A673 (cell line): ENCODE measurements at regions of chrX and their contacts with region 1.

Region 1: GRCh38 chrX:40169193-40170101 is 71.7 kb upstream of the BCOR start:
- DNase-seq: peak; percentile 77
- H3K4me3 ChIP-seq: no peak overlapping the region
- H3K27ac ChIP-seq: peak overlapping the region; percentile 69
- H3K4me1 ChIP-seq: peaks cover 62% of the 10 kb centered on the region
- H3K27me3 ChIP-seq: no peaks in the 10 kb centered on the region
- CTCF ChIP-seq: peak; percentile 44

Region 2: GRCh38 chrX:39726771-39727170 is 442.7 kb before region 1 on chrX:
- CTCF ChIA-PET with region 1: no interaction called
- POLR2A ChIA-PET with region 1: no interaction called
- intact Hi-C with region 1: loop called (anchors 5 kb)
- DNase-seq: peak; percentile 87
- H3K4me3 ChIP-seq: no peak overlapping the region
- H3K27ac ChIP-seq: no peak overlapping the region
- H3K4me1 ChIP-seq: peaks cover 27% of the 10 kb centered on the region
- H3K27me3 ChIP-seq: no peaks in the 10 kb centered on the region
- CTCF ChIP-seq: no peak

Region 3: GRCh38 chrX:39814391-39814790 is 355.1 kb before region 1 on chrX:
- CTCF ChIA-PET with region 1: no interaction called
- POLR2A ChIA-PET with region 1: no interaction called
- intact Hi-C with region 1: loop called (anchors 10 kb)
- DNase-seq: peak; percentile 35
- H3K4me3 ChIP-seq: no peak overlapping the region
- H3K27ac ChIP-seq: no peak overlapping the region
- H3K4me1 ChIP-seq: peaks cover 16% of the 10 kb centered on the region
- H3K27me3 ChIP-seq: no peaks in the 10 kb centered on the region
- CTCF ChIP-seq: peak; percentile 61

Region 4: DNA sequence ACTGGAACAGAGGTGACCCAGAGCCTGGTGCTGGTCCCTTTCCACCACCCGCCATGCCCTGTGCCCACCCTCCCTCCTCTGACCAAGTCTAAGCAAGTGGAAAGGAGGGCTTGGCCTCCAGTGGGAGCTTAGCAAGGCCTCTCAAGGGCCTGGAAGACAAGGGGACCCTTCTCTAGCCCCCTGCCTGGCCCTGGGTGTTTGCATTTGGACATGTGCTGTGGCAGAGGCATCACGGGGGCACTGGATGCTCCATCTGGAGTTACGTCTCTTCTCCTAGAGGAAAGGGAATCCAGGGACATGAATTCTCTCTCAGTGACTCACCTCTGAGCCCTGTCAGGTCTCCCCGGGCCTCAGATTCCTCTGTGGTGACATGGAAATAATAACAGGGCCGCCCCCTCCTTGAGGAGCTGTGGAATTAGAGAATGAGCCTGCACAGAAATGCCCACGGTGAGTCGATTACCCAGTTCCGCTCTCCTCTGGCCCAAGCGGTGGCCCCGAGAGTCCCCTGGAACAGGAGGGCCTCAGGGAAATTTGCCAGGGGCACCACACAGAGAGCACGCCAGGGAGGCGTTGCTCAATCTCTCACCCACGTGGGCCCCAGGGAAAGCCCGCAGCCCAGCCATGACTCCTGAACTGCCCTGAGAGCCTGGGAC is 261.4 kb before region 1 on chrX:
- CTCF ChIA-PET with region 1: no interaction called
- POLR2A ChIA-PET with region 1: no interaction called
- intact Hi-C with region 1: loop called (anchors 10 kb)
- DNase-seq: peak; percentile 54
- H3K4me3 ChIP-seq: no peak overlapping the region
- H3K27ac ChIP-seq: no peak overlapping the region
- H3K4me1 ChIP-seq: peaks cover 10% of the 10 kb centered on the region
- H3K27me3 ChIP-seq: no peaks in the 10 kb centered on the region
- CTCF ChIP-seq: no peak